MCF 10A (cell line): ENCODE measurements at regions of chr4 and their contacts with region 1.

Region 1: GRCh38 chr4:121900132-121900983 is 30.1 kb upstream of the BBS7 start:
- DNase-seq: peak; percentile 73
- H3K4me3 Mint-ChIP-seq: no peak overlapping the region
- H3K27ac Mint-ChIP-seq: no peak overlapping the region
- H3K4me1 Mint-ChIP-seq: no peaks in the 10 kb centered on the region
- H3K27me3 Mint-ChIP-seq: peaks cover 16% of the 10 kb centered on the region
- CTCF ChIP-seq: peak; percentile 86

Region 2: DNA sequence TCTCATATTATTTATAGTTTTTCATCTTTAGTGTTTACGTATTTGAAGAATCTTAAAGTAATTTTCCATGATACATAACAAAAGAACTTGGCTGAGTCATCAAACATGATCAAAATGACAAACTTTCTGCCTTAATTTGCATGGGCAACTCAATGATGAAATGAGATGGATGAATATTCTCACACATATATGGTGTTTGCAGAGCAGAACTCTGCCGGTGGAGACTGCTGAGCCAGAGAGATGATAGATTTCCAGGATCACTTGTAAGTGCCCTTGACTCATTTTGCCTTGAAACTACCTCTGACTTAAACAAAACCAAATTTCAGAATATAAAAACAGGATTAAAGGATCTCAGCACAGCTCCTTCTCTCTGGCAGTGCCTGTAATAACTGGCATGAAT is 13.3 kb after region 1 on chr4:
- CTCF ChIA-PET with region 1: interaction called, 13 read pairs
- POLR2A ChIA-PET with region 1: no interaction called
- intact Hi-C with region 1: no loop called
- DNase-seq: no peak
- H3K4me3 Mint-ChIP-seq: no peak overlapping the region
- H3K27ac Mint-ChIP-seq: no peak overlapping the region
- H3K4me1 Mint-ChIP-seq: no peaks in the 10 kb centered on the region
- H3K27me3 Mint-ChIP-seq: no peaks in the 10 kb centered on the region
- CTCF ChIP-seq: no peak

Region 3: DNA sequence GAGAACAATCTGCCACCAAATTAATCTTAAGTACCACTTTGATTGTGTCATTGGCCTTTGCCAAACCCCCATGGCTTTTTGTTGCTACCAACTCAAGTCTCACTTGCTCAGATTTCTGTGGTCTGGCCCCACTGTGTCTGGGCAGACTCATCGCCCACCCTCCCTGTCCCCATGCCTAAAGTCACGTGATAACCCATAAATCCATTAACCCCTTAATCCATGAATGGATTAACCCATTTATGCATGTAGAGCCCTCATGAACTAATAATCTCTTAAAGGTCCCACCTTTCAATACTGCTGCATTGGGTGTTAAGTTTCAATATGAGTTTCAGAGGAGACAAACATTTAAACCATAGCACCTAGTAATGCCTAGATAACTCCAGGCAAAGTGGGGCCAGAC is 173.3 kb after region 1 on chr4:
- CTCF ChIA-PET with region 1: no interaction called
- POLR2A ChIA-PET with region 1: no interaction called
- intact Hi-C with region 1: no loop called
- DNase-seq: no peak
- H3K4me3 Mint-ChIP-seq: no peak overlapping the region
- H3K27ac Mint-ChIP-seq: no peak overlapping the region
- H3K4me1 Mint-ChIP-seq: peaks cover 5% of the 10 kb centered on the region
- H3K27me3 Mint-ChIP-seq: no peaks in the 10 kb centered on the region
- CTCF ChIP-seq: no peak

Region 4: GRCh38 chr4:122151982-122152710 is 251.8 kb after region 1 on chr4 and contains the start of gene BLTP1:
- CTCF ChIA-PET with region 1: interaction called, 18 read pairs
- POLR2A ChIA-PET with region 1: interaction called, 4 read pairs
- intact Hi-C with region 1: no loop called
- DNase-seq: peak; percentile 79
- H3K4me3 Mint-ChIP-seq: peak within 1 kb of the TSS; percentile 93
- H3K27ac Mint-ChIP-seq: peak within 1 kb of the TSS; percentile 95
- H3K4me1 Mint-ChIP-seq: peaks cover 11% of the 10 kb centered on the region
- H3K27me3 Mint-ChIP-seq: no peaks in the 10 kb centered on the region
- CTCF ChIP-seq: no peak
- total RNA-seq, gene BLTP1: 28.0 and 33.1 TPM in 2 replicates

Region 5: GRCh38 chr4:122224348-122224747 is 324.0 kb after region 1 on chr4:
- CTCF ChIA-PET with region 1: interaction called, 13 read pairs
- POLR2A ChIA-PET with region 1: no interaction called
- intact Hi-C with region 1: loop called (anchors 1 kb)
- DNase-seq: peak; percentile 40
- H3K4me3 Mint-ChIP-seq: no peak overlapping the region
- H3K27ac Mint-ChIP-seq: no peak overlapping the region
- H3K4me1 Mint-ChIP-seq: no peaks in the 10 kb centered on the region
- H3K27me3 Mint-ChIP-seq: no peaks in the 10 kb centered on the region
- CTCF ChIP-seq: peak; percentile 17

Region 6: DNA sequence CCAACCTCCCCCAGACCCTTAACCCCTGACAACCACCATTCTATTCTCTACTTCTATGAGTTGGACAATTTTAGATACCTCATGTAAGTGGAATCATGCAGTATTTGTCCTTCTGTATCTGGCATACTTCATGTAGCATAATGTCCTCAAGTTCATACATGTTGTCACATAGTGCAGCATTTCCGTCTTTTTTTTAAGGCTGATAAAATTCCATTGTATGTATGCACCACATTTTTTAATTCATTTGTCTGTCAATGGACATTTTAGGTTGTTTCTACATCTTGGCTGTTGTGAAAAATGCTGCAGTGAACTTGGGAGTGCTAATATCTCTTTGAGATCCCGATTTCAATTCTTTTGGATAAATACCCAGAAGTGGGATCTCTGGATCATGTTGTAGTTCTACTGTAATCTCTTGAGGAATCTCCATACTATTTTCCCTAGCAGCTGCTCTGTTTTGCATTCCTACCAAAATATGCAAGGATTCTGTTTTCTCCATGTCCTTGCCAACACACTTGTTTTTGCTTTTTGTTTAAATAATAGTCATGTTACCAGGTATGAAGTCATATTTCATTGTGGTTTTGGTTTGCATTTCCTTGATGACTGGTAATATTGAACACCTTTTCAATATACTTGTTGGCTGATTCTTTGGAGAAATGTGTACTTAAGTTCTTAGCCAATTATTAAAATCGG is 429.7 kb after region 1 on chr4:
- CTCF ChIA-PET with region 1: no interaction called
- POLR2A ChIA-PET with region 1: no interaction called
- intact Hi-C with region 1: no loop called
- DNase-seq: no peak
- H3K4me3 Mint-ChIP-seq: no peak overlapping the region
- H3K27ac Mint-ChIP-seq: no peak overlapping the region
- H3K4me1 Mint-ChIP-seq: no peaks in the 10 kb centered on the region
- H3K27me3 Mint-ChIP-seq: no peaks in the 10 kb centered on the region
- CTCF ChIP-seq: no peak

Region 7: GRCh38 chr4:122450847-122451246 is 550.5 kb after region 1 on chr4:
- CTCF ChIA-PET with region 1: no interaction called
- POLR2A ChIA-PET with region 1: no interaction called
- intact Hi-C with region 1: loop called (anchors 1 kb)
- DNase-seq: peak; percentile 62
- H3K4me3 Mint-ChIP-seq: no peak overlapping the region
- H3K27ac Mint-ChIP-seq: no peak overlapping the region
- H3K4me1 Mint-ChIP-seq: no peaks in the 10 kb centered on the region
- H3K27me3 Mint-ChIP-seq: peaks cover 7% of the 10 kb centered on the region
- CTCF ChIP-seq: peak; percentile 31